ENCODE measurements at regions of chr1 and their contacts with region 1.

Region 1: DNA sequence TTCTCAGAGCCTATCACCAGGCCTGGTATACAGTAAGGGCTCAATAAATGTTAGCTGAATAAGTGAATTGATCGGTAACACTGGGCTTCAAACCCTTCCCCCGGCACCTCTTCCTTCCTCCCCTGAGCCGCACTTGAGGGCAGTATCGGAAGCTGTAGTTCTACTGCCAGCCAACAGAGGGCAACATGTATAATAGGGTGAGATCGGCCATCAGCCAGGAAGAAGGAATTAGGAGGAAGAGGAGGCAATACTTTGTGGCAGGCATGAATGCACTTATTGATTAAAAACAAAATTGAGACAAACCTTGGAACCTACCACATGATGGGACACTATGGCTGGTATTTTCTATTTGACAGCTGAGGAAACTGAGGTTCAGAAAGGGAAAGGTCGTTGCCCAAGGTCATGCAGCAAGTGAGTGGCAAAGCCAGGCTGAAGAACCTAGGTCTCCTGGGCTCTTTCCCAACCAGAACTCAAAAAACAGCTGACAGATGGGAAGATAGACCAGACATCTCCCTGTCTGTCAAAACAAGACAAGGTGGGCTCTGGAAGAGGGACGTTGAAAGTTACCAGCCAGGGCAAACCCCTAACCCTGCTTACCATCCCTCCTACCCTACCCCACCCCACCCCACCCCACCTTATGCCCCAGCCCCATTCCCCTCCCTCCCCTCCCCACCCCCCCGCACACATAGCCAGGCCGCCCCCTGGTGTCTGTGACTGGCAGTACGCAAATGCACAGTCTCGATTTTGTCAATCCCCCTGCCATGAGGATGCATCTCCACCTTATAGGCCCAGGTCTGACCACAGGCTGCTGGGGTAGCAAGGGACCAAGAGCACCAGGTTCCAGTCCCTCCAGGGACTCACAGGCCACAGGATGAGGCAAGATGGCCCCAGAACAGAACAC is 107.3 kb upstream of the RUNX3 start:
- DNase-seq: peak; percentile 82
- H3K4me3 Mint-ChIP-seq: no peak overlapping the region
- H3K27ac Mint-ChIP-seq: no peak overlapping the region
- H3K4me1 Mint-ChIP-seq: peaks cover 28% of the 10 kb centered on the region
- H3K27me3 Mint-ChIP-seq: no peaks in the 10 kb centered on the region

Region 2: GRCh38 chr1:24847995-24848881 is 189.2 kb before region 1 on chr1:
- CTCF ChIA-PET with region 1: interaction called, 20 read pairs
- intact Hi-C with region 1: loop called (anchors 1 kb)
- DNase-seq: peak; percentile 94
- H3K4me3 Mint-ChIP-seq: peak overlapping the region; percentile 70
- H3K27ac Mint-ChIP-seq: no peak overlapping the region
- H3K4me1 Mint-ChIP-seq: peaks cover 7% of the 10 kb centered on the region
- H3K27me3 Mint-ChIP-seq: peaks cover 3% of the 10 kb centered on the region

Region 3: GRCh38 chr1:24919791-24920532 is 117.5 kb before region 1 on chr1:
- CTCF ChIA-PET with region 1: interaction called, 12 read pairs
- intact Hi-C with region 1: no loop called
- DNase-seq: peak; percentile 61
- H3K4me3 Mint-ChIP-seq: no peak overlapping the region
- H3K27ac Mint-ChIP-seq: peak overlapping the region; percentile 81
- H3K4me1 Mint-ChIP-seq: peaks cover 52% of the 10 kb centered on the region
- H3K27me3 Mint-ChIP-seq: no peaks in the 10 kb centered on the region

Region 4: DNA sequence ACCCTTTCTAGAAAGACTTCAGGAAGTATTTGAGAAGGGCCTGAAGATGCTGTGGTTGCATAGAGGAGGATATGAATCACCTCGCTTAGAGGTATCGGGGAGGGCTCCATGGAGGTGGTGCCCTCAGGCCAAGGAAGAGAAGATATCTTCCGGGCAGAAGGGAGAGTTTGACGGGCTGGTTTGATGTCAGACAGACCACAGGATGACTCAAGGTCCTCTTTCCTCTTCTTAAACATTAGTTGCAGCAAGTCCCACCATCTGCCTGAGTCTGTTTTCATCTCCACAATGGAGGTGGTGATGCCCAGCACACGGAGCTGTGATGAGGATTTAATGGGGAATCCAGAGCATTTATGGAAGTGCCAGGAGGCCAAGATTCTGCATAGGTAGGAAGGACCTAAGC is 82.3 kb before region 1 on chr1:
- CTCF ChIA-PET with region 1: interaction called, 60 read pairs
- intact Hi-C with region 1: no loop called
- DNase-seq: peak; percentile 94
- H3K4me3 Mint-ChIP-seq: peak overlapping the region; percentile 89
- H3K27ac Mint-ChIP-seq: peak overlapping the region; percentile 95
- H3K4me1 Mint-ChIP-seq: peaks cover 85% of the 10 kb centered on the region
- H3K27me3 Mint-ChIP-seq: no peaks in the 10 kb centered on the region

Region 5: GRCh38 chr1:24970399-24970753 is 67.0 kb before region 1 on chr1:
- CTCF ChIA-PET with region 1: interaction called, 60 read pairs
- intact Hi-C with region 1: no loop called
- DNase-seq: no peak
- H3K4me3 Mint-ChIP-seq: peak overlapping the region; percentile 53
- H3K27ac Mint-ChIP-seq: peak overlapping the region; percentile 83
- H3K4me1 Mint-ChIP-seq: peaks cover 80% of the 10 kb centered on the region
- H3K27me3 Mint-ChIP-seq: no peaks in the 10 kb centered on the region

Region 6: GRCh38 chr1:25003457-25004190 is 33.8 kb before region 1 on chr1:
- CTCF ChIA-PET with region 1: interaction called, 11 read pairs
- intact Hi-C with region 1: no loop called
- DNase-seq: peak; percentile 66
- H3K4me3 Mint-ChIP-seq: no peak overlapping the region
- H3K27ac Mint-ChIP-seq: peak overlapping the region; percentile 67
- H3K4me1 Mint-ChIP-seq: peaks cover 51% of the 10 kb centered on the region
- H3K27me3 Mint-ChIP-seq: no peaks in the 10 kb centered on the region

Region 7: GRCh38 chr1:25099343-25099951 is 62.0 kb after region 1 on chr1:
- CTCF ChIA-PET with region 1: interaction called, 24 read pairs
- intact Hi-C with region 1: loop called (anchors 1 kb)
- DNase-seq: peak; percentile 39
- H3K4me3 Mint-ChIP-seq: no peak overlapping the region
- H3K27ac Mint-ChIP-seq: peak overlapping the region; percentile 25
- H3K4me1 Mint-ChIP-seq: peaks cover 54% of the 10 kb centered on the region
- H3K27me3 Mint-ChIP-seq: no peaks in the 10 kb centered on the region